ENCODE measurements at regions of chr11 and their contacts with region 1.

Region 1: DNA sequence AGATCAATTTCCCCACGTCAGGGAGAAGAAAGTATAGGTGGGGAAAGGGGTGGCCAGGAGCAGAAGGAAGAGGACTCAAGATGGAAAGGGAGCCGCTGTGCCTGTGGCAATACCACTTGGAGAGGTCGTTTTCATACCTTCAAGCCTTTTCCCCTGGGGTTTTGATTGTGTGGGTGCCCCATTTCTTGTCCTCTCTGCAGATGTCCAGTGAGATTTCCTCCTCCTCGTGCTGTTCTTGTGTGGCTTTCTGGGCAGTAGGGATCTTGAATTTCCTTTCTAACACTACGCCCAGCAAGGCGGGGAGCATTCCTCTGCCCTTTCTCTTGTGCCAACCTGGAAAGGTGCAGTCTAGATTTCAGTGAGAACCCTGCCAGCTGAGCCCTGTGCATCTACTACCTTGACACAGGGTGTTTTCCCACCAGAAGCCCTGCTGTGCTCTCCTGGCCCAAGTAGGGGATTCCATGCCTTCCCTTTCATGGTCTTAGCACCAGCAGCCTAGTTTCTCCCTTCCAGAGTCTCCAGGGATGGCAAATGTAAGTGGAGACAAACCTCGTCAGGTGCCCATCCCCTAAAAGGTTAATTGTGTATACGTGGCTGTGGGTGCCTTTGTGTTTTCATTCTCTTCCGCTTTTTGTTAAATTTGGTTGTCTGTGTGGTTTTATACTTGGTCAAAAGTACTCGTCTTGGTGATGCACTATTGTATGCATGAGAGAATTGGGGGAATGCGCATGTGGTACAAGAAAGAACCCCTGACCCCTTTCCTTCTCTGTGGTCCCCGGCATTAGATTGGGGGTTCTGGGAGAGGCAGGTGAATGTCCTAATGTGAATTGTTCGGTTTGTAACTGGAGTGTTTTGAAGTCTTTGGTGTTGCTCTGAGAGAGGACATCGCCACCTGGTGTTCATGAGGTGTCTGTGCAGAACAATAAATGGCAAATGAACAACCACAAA is 71.4 kb upstream of the MPEG1 start:
- DNase-seq: no peak

Region 2: DNA sequence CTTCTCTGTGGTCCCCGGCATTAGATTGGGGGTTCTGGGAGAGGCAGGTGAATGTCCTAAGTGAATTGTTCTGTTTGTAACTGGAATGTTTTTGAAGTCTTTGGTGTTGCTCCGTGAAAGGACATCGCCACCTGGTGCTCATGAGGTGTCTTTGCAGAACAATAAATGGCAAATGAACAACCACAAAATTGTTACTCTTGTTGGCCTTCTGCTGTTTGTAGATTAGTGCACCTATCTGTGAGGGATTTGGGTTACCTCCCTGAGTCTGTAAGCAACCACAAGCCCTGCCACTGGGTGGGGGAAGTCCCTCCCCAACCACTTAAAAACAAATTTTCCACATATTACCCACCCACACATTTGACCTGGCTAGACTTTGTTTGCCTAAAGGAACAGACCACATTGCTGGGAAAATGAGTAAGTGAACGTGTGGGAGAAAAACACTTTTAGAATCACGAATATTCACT is 76.1 kb before region 1 on chr11:
- intact Hi-C with region 1: loop called in 1 of 2 experiments (anchors 10 kb)
- DNase-seq: no peak

Region 3: DNA sequence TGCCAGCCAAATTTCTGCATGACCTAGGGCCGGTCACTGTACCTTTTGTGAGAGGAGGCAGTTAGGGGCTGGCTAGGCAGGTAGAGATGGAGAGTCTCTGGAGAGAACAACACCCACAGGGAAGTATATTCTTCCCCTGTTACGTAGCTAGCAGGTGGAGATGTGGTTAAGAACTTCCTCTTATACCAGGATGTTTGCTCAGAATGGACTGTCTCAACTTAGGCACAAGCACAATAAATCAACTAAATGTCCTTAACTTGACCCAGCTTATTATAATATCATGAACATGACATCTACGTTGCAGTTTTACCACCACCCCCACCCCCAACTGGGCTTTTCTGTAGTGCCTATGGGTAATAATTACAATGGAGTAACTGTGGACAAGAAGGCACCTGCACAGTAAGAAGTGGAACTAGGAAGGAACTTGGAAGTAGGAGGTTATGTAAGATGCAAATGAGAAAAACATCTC is 10.7 kb before region 1 on chr11:
- intact Hi-C with region 1: no loop called
- DNase-seq: no peak

Region 4: GRCh38 chr11:59335001-59335400 is 50.9 kb after region 1 on chr11:
- intact Hi-C with region 1: no loop called
- DNase-seq: no peak